Activated CD4-positive, alpha-beta T cell treated with anti-CD3 and anti-CD28 coated beads, Interleukin-2, amount 10 ng/mL, durations not matched to agents 7 days and 5 days (primary cell): ENCODE measurements at regions of chr11 and their contacts with region 1.

Region 1: GRCh38 chr11:62787005-62787759 is at the start of gene TMEM179B:
- DNase-seq: peak; percentile 99
- H3K4me3 Mint-ChIP-seq: peak within 1 kb of the TSS; percentile 95
- H3K27ac Mint-ChIP-seq: peak within 1 kb of the TSS; percentile 97
- H3K4me1 Mint-ChIP-seq: peaks cover 46% of the 10 kb centered on the region
- H3K27me3 Mint-ChIP-seq: no peaks in the 10 kb centered on the region
- total RNA-seq, gene TMEM179B: 46.8 to 55.9 TPM

Region 2: GRCh38 chr11:62705880-62706849 is 81.0 kb before region 1 on chr11:
- CTCF ChIA-PET with region 1: interaction called, 15 read pairs
- POLR2A ChIA-PET with region 1: no interaction called
- DNase-seq: peak; percentile 94
- H3K4me3 Mint-ChIP-seq: peak overlapping the region; percentile 88
- H3K27ac Mint-ChIP-seq: peak overlapping the region; percentile 81
- H3K4me1 Mint-ChIP-seq: peaks cover 49% of the 10 kb centered on the region
- H3K27me3 Mint-ChIP-seq: no peaks in the 10 kb centered on the region

Region 3: DNA sequence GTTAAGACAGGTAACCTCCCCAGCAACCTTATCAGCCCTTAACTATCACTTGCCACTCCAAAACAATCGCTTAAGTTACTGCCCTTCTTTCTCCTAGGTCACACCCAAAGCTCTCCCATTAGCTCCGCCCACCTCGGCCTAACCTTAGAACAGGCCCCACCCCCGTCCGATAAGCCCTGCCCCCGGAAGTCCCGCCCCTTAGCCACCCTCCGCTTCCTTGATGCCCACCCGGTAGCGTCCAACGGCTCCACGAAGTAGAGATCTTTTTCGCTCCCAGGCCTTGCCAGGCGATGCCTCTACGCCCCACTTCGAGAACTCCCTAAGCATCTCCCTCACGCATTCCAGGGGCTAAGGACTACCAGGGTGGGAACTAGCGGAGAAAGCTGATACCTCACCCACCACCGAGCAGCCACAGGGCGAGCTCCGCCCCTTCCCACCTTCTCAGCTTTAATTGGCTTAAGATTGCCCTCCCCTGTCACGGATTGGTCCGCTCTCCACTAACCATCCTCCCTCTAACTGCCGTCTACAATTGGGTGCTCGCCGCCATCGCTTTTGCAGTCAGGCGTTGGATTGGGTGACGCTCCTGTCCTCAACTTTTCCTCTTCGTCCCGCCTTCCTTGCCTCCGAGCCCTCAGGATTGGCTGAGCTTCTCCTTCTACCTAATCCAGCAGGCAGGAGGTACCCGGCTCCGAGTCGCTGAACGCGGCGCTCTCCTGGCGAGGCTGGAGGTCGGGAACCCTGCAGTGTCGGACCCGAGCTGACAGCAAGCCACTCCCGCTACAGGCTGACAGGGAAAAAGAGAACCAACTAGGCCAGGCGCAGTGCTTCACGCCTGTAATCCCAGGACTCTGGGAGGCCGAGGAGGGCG is 33.2 kb before region 1 on chr11 and contains the start of gene ZBTB3:
- CTCF ChIA-PET with region 1: interaction called, 34 read pairs
- POLR2A ChIA-PET with region 1: interaction called, 6 read pairs
- DNase-seq: peak; percentile 99
- H3K4me3 Mint-ChIP-seq: peak within 1 kb of the TSS; percentile 92
- H3K27ac Mint-ChIP-seq: peak within 1 kb of the TSS; percentile 95
- H3K4me1 Mint-ChIP-seq: peaks cover 27% of the 10 kb centered on the region
- H3K27me3 Mint-ChIP-seq: no peaks in the 10 kb centered on the region
- total RNA-seq, gene ZBTB3: 14.3 to 18.5 TPM

Region 4: DNA sequence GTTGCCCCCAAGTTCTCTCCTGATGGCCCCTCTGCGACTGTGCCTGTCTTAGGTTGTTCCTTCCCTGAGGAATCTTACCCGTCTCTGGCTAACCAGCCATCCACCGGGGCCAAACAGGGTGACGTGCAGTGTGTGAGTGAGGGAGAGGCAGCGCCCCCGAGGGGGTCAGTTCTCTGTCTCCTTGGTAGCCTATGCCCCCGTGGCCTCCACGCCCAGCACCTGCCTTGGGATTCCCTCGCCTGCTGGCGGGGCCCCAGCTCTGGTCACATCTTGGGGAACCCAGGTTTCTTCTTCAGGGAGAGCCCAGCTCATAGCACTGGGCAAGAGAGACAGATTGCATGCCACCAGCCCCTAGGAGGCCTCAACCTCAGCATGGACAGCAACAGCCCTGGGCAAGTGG is 12.3 kb after region 1 on chr11:
- CTCF ChIA-PET with region 1: interaction called, 37 read pairs
- POLR2A ChIA-PET with region 1: no interaction called
- DNase-seq: no peak
- H3K4me3 Mint-ChIP-seq: no peak overlapping the region
- H3K27ac Mint-ChIP-seq: no peak overlapping the region
- H3K4me1 Mint-ChIP-seq: peaks cover 18% of the 10 kb centered on the region
- H3K27me3 Mint-ChIP-seq: no peaks in the 10 kb centered on the region

Region 5: GRCh38 chr11:62831520-62832335 is 44.5 kb after region 1 on chr11 and contains the start of gene STX5:
- CTCF ChIA-PET with region 1: interaction called, 17 read pairs
- POLR2A ChIA-PET with region 1: interaction called, 3 read pairs
- DNase-seq: peak; percentile 100
- H3K4me3 Mint-ChIP-seq: peak within 1 kb of the TSS; percentile 94
- H3K27ac Mint-ChIP-seq: peak within 1 kb of the TSS; percentile 99
- H3K4me1 Mint-ChIP-seq: peaks cover 36% of the 10 kb centered on the region
- H3K27me3 Mint-ChIP-seq: no peaks in the 10 kb centered on the region
- total RNA-seq, gene STX5: 34.1 to 41.0 TPM

Region 6: DNA sequence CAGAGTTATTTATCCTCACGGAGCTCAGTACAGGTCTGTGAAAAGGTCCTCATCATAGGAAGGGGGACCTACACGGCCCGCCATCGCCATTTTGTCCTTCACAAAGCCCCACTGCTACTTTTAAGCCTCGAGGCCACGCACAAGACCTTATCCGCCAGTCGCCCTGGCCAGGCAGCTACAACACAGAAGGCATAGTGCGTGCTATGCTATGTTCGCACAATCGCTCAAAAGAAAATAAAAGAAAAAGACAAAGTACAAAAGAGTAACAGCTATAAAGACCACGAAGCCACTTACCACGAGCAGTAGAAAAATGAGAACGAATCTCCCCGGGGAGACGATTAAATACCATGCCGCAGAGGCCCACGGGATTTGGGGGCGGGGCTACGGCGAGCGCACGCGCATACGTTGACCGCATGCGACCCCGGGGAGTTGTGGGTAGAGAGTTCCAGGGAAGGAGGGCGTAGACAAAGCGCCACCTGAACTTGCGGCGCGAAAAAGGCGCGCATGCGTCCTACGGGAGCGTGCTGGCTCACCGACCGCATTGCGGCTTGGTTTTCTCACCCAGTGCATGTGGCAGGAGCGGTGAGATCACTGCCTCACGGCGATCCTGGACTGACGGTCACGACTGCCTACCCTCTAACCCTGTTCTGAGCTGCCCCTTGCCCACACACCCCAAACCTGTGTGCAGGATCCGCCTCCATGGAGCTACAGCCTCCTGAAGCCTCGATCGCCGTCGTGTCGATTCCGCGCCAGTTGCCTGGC is 68.6 kb after region 1 on chr11:
- CTCF ChIA-PET with region 1: interaction called, 34 read pairs
- POLR2A ChIA-PET with region 1: interaction called, 4 read pairs
- DNase-seq: peak; percentile 98
- H3K4me3 Mint-ChIP-seq: peak overlapping the region; percentile 95
- H3K27ac Mint-ChIP-seq: peak overlapping the region; percentile 99
- H3K4me1 Mint-ChIP-seq: peaks cover 65% of the 10 kb centered on the region
- H3K27me3 Mint-ChIP-seq: no peaks in the 10 kb centered on the region

Region 7: DNA sequence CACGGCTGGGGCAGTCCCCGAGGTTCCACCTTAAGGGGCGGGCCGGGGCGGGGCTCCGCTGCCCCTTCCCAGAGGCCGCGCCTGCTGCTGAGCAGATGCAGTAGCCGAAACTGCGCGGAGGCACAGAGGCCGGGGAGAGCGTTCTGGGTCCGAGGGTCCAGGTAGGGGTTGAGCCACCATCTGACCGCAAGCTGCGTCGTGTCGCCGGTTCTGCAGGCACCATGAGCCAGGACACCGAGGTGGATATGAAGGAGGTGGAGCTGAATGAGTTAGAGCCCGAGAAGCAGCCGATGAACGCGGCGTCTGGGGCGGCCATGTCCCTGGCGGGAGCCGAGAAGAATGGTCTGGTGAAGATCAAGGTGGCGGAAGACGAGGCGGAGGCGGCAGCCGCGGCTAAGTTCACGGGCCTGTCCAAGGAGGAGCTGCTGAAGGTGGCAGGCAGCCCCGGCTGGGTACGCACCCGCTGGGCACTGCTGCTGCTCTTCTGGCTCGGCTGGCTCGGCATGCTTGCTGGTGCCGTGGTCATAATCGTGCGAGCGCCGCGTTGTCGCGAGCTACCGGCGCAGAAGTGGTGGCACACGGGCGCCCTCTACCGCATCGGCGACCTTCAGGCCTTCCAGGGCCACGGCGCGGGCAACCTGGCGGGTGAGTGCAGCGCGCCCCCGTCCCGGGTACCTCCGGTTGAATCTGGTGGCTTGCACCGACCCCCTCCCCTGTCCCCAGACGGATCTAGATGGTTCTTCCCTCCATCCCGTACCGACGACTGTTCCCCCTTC is 93.8 kb after region 1 on chr11 and contains the start of gene SLC3A2:
- CTCF ChIA-PET with region 1: interaction called, 27 read pairs
- POLR2A ChIA-PET with region 1: no interaction called
- DNase-seq: peak; percentile 89
- H3K4me3 Mint-ChIP-seq: peak within 1 kb of the TSS; percentile 98
- H3K27ac Mint-ChIP-seq: peak within 1 kb of the TSS; percentile 100
- H3K4me1 Mint-ChIP-seq: peaks cover 53% of the 10 kb centered on the region
- H3K27me3 Mint-ChIP-seq: no peaks in the 10 kb centered on the region
- total RNA-seq, gene SLC3A2: 153 to 157 TPM

Region 8: DNA sequence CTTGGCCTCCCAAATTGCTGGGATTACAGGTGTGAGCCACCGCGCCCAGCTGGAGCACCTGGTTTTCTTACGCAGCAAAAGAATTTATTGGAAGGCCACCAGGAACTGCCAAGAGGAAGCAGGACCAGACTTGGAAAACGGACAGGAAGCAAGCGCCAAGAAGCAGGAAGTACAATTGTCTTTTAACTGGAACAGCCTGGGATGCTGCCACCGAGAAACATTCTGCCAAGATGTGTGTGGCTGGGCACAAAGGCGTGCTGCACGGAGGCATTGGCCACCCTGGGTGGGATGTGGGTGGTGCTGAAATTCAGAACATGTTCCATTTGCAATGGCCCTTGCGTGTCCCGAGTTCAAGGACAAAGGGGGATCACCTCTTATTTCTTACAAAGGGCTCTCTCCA is 108.9 kb after region 1 on chr11:
- CTCF ChIA-PET with region 1: no interaction called
- POLR2A ChIA-PET with region 1: no interaction called
- DNase-seq: no peak
- H3K4me3 Mint-ChIP-seq: no peak overlapping the region
- H3K27ac Mint-ChIP-seq: no peak overlapping the region
- H3K4me1 Mint-ChIP-seq: peaks cover 2% of the 10 kb centered on the region
- H3K27me3 Mint-ChIP-seq: peaks cover 19% of the 10 kb centered on the region